Calu3 (cell line): ENCODE measurements at regions of chr15 and their contacts with region 1.

Region 1: DNA sequence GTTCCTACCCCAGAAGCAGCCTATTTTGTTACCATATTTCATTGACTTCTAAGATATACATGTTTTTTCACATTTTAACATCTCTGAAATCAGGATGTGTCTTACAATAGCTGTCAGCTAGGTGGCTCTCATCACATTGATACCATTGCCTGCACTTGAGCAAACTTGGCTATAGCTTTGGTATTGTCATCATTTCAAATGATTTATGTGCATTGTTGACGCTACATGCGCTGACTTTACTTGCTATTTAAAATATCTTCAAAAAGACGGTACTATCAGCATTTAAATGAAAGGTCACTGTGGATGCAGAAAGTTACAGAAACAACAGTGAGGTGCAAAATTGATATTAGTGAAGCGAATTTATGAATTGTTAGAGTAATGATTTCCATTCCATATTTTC is 54.0 kb upstream of the ABHD2 start:
- DNase-seq: no peak
- H3K4me3 Mint-ChIP-seq: no peak overlapping the region
- H3K27ac Mint-ChIP-seq: no peak overlapping the region
- H3K4me1 Mint-ChIP-seq: no peaks in the 10 kb centered on the region
- H3K27me3 Mint-ChIP-seq: peaks cover 47% of the 10 kb centered on the region
- CTCF ChIP-seq: peak; percentile 18

Region 2: DNA sequence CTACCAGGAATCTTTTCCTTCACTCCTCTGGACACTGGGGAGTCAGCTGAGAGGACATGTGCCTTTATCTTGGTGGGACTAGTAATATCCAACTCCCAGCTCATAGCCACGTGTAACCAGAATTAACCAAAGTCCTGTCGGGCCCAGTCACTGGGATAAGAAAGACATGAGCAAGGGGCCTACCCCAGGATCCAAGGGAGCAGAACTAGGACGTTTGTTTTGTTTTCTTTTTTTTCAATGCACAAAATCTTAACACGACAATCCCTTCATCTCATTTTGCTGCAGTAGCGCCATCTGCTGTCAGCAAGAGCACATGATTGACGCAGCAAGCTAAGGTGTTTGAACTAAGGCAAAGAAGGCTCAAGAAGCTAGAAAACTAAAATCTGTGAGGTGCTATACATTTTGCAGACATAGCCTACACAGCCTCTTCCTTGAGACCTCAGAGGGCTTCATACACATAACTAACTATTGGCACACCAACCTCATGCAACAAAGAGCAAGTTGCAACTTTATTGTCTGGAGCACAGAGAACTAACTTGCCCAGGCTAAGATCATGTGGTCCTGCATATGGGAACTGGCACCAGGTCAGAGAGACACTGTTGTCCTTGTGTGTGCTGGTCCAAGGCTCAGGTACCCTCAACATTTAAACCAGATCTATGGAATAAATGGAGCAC is 143.5 kb after region 1 on chr15:
- CTCF ChIA-PET with region 1: interaction called, 9 read pairs
- intact Hi-C with region 1: loop called (anchors 1 kb)
- DNase-seq: peak; percentile 70
- H3K4me3 Mint-ChIP-seq: no peak overlapping the region
- H3K27ac Mint-ChIP-seq: no peak overlapping the region
- H3K4me1 Mint-ChIP-seq: no peaks in the 10 kb centered on the region
- H3K27me3 Mint-ChIP-seq: no peaks in the 10 kb centered on the region
- CTCF ChIP-seq: peak; percentile 76